Activated naive CD4-positive, alpha-beta T cell treated with anti-CD3 and anti-CD28 coated beads for 36 hours (primary cell): ENCODE measurements at regions of chr11 and their contacts with region 1.

Region 1: GRCh38 chr11:44927174-44927661 is 23.5 kb downstream of the TP53I11 start:
- DNase-seq: peak; percentile 69
- H3K4me3 Mint-ChIP-seq: no peak overlapping the region
- H3K27ac Mint-ChIP-seq: no peak overlapping the region
- H3K4me1 Mint-ChIP-seq: no peaks in the 10 kb centered on the region
- H3K27me3 Mint-ChIP-seq: no peaks in the 10 kb centered on the region

Region 2: DNA sequence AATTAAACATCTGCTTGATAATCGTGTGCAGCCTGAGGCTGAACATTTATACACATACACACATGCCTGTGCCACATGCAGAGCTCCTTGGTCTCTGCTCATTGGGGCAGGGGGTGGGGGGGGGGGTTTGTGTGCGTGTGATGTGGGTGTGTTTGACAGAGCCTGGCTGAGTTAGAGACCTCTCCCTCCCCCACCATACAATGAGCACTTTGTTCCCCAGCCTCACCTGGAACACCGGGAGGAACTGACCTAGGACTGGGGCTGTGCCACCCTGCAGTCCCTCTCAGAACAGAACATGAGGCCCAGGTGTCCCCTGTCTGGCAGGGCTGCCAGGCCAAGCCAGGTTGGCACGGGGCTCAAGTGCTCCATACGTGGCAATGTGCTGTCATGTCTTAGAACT is 73.1 kb before region 1 on chr11:
- CTCF ChIA-PET with region 1: no interaction called
- intact Hi-C with region 1: no loop called
- DNase-seq: no peak
- H3K4me3 Mint-ChIP-seq: no peak overlapping the region
- H3K27ac Mint-ChIP-seq: no peak overlapping the region
- H3K4me1 Mint-ChIP-seq: peaks cover 16% of the 10 kb centered on the region
- H3K27me3 Mint-ChIP-seq: no peaks in the 10 kb centered on the region

Region 3: DNA sequence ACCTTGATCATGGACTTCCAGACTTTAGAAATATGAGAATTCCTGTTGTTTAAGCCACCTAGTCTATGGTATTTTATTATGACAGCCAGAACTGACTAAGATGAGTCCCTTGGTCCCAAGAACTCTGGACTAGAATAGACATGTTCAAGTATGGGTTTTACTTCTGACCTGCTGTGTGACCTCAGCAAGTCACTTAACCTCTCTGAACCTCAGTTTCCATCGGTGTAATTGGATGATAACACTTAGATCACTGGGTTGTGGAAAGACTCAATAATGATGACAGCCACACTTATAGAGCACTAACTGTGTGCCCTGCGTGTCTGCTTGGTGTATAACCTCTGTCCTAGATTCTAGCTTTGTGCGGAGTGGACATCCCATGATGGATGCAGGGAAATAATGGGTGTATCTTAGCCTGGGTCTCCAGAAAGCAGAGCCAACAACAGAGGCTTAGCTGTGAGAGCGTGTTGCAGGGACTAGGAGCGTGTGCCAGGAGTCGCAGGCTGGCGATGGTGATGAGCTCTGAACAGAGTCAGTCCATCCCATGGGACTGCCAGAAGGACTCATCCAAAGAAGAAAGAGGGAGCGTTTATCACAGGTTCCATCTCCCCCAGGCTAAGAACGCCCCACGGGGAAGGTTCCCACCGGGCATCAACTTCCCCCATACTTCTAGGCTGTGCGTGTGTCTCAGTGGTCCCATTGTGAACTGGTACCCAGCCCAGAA is 116.7 kb after region 1 on chr11:
- CTCF ChIA-PET with region 1: no interaction called
- intact Hi-C with region 1: no loop called
- DNase-seq: no peak
- H3K4me3 Mint-ChIP-seq: no peak overlapping the region
- H3K27ac Mint-ChIP-seq: no peak overlapping the region
- H3K4me1 Mint-ChIP-seq: peaks cover 2% of the 10 kb centered on the region
- H3K27me3 Mint-ChIP-seq: no peaks in the 10 kb centered on the region

Region 4: DNA sequence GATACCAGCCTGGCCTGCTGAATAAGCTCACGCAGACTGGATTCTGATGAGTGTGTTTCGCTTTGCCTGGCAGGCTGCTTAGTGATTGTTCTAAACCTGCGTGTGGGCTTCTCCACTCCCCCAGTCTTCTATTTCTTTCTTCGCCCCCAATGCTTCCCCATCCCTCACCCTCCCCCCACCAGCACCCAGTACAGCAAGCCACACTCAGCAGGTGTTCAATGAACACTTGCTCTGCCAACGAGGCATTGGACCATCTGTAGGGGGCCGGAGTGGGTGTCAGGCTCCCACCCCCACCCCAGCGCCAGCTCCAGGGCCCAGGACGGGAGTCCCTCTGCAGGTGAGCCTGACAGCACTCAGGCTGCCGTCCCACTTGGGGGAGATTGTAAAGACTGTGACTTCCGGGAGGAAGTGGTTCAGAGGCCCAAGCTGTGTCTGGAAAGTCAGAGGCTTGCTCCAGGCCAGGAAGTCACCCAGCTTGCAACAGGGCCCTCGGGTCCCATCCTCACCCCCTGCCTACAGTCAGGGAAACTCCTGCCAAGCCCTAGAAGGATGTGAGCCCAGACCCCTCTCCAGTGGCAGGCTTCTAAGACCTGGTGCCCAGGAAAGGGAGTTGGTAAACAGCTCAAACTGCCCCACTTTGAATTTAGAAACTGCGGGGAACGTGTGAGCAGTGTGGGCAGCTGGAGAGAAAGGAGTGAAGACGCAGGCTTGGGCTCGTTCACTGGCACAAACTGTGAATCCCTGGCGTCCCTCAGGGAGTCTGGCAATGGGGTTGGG is 152.9 kb after region 1 on chr11:
- CTCF ChIA-PET with region 1: interaction called, 17 read pairs
- intact Hi-C with region 1: no loop called
- DNase-seq: peak; percentile 82
- H3K4me3 Mint-ChIP-seq: peak overlapping the region; percentile 33
- H3K27ac Mint-ChIP-seq: peak overlapping the region; percentile 86
- H3K4me1 Mint-ChIP-seq: peaks cover 40% of the 10 kb centered on the region
- H3K27me3 Mint-ChIP-seq: no peaks in the 10 kb centered on the region

Region 5: DNA sequence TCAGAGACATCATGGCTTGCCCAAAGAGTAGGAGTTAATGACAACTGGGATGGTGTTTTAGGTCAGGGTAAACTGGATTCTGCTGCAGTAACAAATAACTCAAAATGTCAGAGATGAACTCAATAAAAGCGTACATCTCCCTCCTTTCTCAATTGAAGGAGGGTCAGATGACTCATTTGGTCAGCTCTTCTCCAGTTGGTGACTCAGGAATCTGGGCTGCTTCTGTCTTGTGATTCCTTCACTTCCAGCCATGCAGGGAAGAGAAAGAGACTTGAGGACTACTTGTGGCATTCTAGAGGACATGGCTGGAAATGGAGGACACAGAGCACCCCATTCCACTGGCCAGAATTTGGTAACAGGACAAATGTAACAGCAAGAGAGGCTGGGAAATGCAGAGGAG is 362.2 kb after region 1 on chr11:
- CTCF ChIA-PET with region 1: interaction called, 3 read pairs
- intact Hi-C with region 1: loop called (anchors 1 kb)
- DNase-seq: no peak
- H3K4me3 Mint-ChIP-seq: no peak overlapping the region
- H3K27ac Mint-ChIP-seq: no peak overlapping the region
- H3K4me1 Mint-ChIP-seq: no peaks in the 10 kb centered on the region
- H3K27me3 Mint-ChIP-seq: peaks cover 46% of the 10 kb centered on the region